HEK293 (cell line): ENCODE measurements at regions of chr5 and their contacts with region 1.

Region 1: GRCh38 chr5:52948418-52949076 is 40.6 kb upstream of the ITGA2 start:
- H3K4me3 ChIP-seq: no peak overlapping the region
- H3K27ac ChIP-seq: no peak overlapping the region
- H3K4me1 ChIP-seq: no peaks in the 10 kb centered on the region
- CTCF ChIP-seq: no peak

Region 2: DNA sequence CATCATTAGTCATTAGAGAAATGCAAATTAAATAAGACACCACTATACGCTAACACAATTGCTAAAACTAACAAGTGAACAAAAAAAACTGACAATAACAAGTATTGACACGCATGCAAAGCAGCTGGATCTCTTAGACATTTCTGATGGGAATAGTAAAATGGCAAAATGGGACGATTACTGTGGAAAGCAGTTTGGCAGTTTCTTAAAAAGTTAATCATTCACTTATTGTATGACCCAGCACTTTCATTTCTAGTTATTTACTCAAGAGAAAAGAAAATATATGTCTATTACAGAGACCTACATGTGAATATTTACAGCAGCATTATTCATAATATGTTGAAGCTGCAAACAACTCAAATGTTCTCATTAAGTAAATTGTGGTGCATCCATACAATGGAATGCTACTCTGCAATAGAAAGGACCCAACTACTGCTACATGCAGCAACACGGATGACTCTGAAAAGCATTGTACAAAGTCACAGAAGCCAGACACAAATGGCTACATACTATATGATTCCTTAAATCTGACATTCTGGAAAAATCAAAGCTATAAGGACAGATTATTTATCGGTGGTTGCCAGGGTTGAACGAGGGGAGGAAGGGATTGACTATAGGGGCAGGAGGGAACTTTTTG is 56.2 kb before region 1 on chr5:
- CTCF ChIA-PET with region 1: no interaction called
- POLR2A ChIA-PET with region 1: no interaction called
- H3K4me3 ChIP-seq: no peak overlapping the region
- H3K27ac ChIP-seq: no peak overlapping the region
- H3K4me1 ChIP-seq: no peaks in the 10 kb centered on the region
- CTCF ChIP-seq: no peak

Region 3: GRCh38 chr5:52922386-52922785 is 26.2 kb before region 1 on chr5:
- CTCF ChIA-PET with region 1: interaction called, 20 read pairs
- POLR2A ChIA-PET with region 1: no interaction called
- H3K4me3 ChIP-seq: no peak overlapping the region
- H3K27ac ChIP-seq: no peak overlapping the region
- H3K4me1 ChIP-seq: peaks cover 3% of the 10 kb centered on the region; the same call in 1 of the 2 replicates
- CTCF ChIP-seq: no peak

Region 4: DNA sequence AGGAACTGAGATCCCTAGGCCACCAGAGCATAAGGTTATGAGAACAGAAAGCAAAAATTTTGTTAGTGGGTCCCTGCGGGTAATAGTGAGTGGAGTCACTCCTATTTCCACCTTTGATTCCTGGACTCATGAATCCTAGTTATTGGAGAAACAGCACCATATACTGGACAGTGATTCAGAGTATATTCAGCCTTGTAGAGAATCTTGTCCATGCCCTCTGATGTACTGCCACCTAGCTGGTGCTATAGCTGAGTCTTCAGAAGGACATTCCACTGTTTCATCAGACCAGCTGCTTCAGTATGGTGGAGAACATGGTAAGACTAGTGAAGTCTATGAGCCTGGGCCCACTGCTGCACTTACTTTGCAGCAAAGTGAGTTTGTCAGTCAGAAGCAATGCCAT is 15.6 kb after region 1 on chr5:
- CTCF ChIA-PET with region 1: interaction called, 14 read pairs
- POLR2A ChIA-PET with region 1: no interaction called
- H3K4me3 ChIP-seq: no peak overlapping the region
- H3K27ac ChIP-seq: no peak overlapping the region
- H3K4me1 ChIP-seq: no peaks in the 10 kb centered on the region
- CTCF ChIP-seq: 0 out of 2 replicates have a peak, but pooled peaks have one; percentile 15

Region 5: DNA sequence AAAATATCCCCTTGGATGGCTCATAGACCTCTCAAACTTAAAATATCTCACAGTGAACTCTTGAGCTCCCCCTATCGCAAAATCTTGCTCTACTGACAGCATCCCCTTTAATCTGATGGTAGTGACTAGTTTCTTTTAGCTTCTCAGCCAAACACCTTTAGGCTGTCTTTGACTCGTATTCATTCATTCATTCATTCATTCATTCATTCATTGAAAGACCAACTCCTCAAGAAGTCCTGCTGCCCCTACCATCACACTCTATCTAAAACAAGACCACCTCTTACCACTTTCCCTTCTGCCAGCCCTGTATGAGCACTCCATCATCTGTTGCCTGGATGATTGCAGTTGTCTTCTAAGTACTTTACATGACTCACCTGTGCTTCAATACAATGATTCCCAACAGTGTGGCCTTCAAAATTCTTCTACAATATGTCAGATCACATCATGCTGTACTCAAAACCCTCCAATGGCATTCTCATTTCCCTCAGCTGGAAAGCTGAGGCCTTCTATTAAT is 87.4 kb after region 1 on chr5:
- CTCF ChIA-PET with region 1: interaction called, 22 read pairs
- POLR2A ChIA-PET with region 1: no interaction called
- H3K4me3 ChIP-seq: no peak overlapping the region
- H3K27ac ChIP-seq: no peak overlapping the region
- H3K4me1 ChIP-seq: peaks cover 34% of the 10 kb centered on the region
- CTCF ChIP-seq: no peak

Region 6: GRCh38 chr5:53095931-53096525 is 147.5 kb after region 1 on chr5:
- CTCF ChIA-PET with region 1: interaction called, 145 read pairs
- POLR2A ChIA-PET with region 1: no interaction called
- H3K4me3 ChIP-seq: no peak overlapping the region
- H3K27ac ChIP-seq: no peak overlapping the region
- H3K4me1 ChIP-seq: no peaks in the 10 kb centered on the region
- CTCF ChIP-seq: peak; percentile 48; the same call in 1 of the 2 replicates